ENCODE measurements at regions of chr4 and their contacts with region 1.

Region 1: GRCh38 chr4:47933840-47934239 is 19.5 kb upstream of the NFXL1 start:
- DNase-seq: peak; percentile 39
- CTCF ChIP-seq: peak; percentile 56

Region 2: GRCh38 chr4:47668810-47669408 is 264.9 kb before region 1 on chr4:
- CTCF ChIA-PET with region 1: interaction called, 17 read pairs
- POLR2A ChIA-PET with region 1: no interaction called
- DNase-seq: peak; percentile 36
- CTCF ChIP-seq: peak; percentile 73

Region 3: DNA sequence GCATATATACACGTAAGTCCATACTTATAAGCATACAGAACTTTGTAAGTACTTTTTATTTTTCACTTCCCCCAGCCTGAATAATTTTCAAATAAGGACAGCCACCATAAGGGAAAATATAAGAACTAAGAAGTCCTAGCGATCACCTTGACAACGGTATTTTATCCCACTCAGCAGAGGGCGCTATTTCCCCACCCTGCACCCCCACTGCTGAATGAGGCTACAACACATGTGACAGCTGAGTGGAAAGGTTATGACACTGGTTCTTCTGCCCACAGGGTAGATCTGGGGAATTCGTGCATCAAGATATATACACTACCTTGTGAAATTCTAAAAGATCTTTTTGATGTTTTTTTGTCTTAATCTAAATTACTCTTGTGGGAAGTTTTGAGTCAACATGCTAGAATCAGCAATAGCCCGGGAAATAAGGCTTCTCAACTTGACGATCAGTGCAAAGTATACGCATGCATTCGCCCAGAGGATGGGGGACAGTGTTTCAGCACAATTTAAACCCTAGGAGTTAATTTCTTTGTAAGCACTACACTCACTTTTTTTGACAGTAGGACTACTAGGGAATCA is 247.5 kb before region 1 on chr4:
- CTCF ChIA-PET with region 1: interaction called, 45 read pairs
- POLR2A ChIA-PET with region 1: no interaction called
- DNase-seq: peak; percentile 50
- CTCF ChIP-seq: peak; percentile 60

Region 4: DNA sequence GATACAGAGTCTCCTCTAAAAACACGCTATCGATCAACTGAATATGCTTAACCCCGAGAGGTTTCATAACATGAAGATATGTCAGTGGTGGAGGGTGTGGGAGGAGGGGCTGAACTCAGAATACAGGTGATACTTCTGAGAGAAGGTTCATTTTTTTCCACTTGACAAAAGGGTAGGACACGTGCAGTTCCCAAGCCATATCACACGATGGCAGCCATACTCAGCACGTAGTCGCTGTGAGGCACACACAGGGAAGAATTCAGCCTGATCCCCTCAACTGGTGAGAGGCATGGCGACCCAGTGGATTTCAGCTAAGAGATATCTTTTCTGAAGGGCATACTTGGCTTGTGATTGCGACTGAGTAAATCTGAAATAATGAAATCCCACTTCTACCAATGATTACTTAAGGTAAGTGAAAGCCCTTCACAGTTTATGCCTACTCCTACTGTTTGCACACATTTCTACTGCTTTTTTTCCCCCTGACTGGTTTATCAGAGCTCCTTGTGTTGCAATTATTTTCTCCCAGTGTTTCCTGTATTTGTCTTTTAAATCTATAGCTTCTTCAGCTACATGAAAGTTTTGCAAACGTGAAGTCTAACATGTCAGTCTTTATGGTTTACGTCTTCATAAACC is 229.0 kb before region 1 on chr4:
- CTCF ChIA-PET with region 1: interaction called, 24 read pairs
- POLR2A ChIA-PET with region 1: no interaction called
- DNase-seq: peak; percentile 15
- CTCF ChIP-seq: peak; percentile 41